Calu3 (cell line): ENCODE measurements at regions of chr1 and their contacts with region 1.

Region 1: GRCh38 chr1:34786521-34787325 is 5.7 kb downstream of the GJB3 start:
- DNase-seq: peak; percentile 70
- H3K4me3 Mint-ChIP-seq: no peak overlapping the region
- H3K27ac Mint-ChIP-seq: no peak overlapping the region
- H3K4me1 Mint-ChIP-seq: peaks cover 31% of the 10 kb centered on the region
- H3K27me3 Mint-ChIP-seq: peaks cover 12% of the 10 kb centered on the region
- CTCF ChIP-seq: peak; percentile 84

Region 2: GRCh38 chr1:34245967-34246366 is 540.8 kb before region 1 on chr1:
- CTCF ChIA-PET with region 1: no interaction called
- intact Hi-C with region 1: no loop called
- DNase-seq: no peak
- H3K4me3 Mint-ChIP-seq: no peak overlapping the region
- H3K27ac Mint-ChIP-seq: no peak overlapping the region
- H3K4me1 Mint-ChIP-seq: no peaks in the 10 kb centered on the region
- H3K27me3 Mint-ChIP-seq: peaks cover 16% of the 10 kb centered on the region
- CTCF ChIP-seq: no peak

Region 3: DNA sequence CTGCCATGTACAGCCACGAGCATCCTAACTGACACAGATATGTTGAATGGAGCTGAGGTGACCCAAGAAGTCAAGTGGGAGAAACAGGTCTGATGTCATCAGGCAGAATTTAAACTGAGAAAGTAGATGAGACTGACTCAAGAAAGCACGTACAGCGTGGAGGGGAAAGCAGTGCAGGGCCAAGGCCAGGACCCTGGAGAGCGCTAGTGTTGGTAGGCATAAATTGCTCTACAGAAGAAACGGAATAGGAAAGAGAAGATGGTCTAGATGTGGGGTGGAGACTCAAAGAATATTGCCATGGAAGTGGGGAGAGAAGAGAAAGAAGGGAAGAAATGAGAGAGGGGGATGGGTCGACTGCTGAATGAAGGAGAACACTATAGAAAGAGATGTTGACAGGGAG is 77.2 kb before region 1 on chr1:
- CTCF ChIA-PET with region 1: no interaction called
- intact Hi-C with region 1: no loop called
- DNase-seq: no peak
- H3K4me3 Mint-ChIP-seq: no peak overlapping the region
- H3K27ac Mint-ChIP-seq: no peak overlapping the region
- H3K4me1 Mint-ChIP-seq: no peaks in the 10 kb centered on the region
- H3K27me3 Mint-ChIP-seq: peaks cover 72% of the 10 kb centered on the region
- CTCF ChIP-seq: no peak

Region 4: GRCh38 chr1:34842073-34842472 is 55.4 kb after region 1 on chr1:
- CTCF ChIA-PET with region 1: no interaction called
- intact Hi-C with region 1: no loop called
- DNase-seq: no peak
- H3K4me3 Mint-ChIP-seq: no peak overlapping the region
- H3K27ac Mint-ChIP-seq: no peak overlapping the region
- H3K4me1 Mint-ChIP-seq: peaks cover 8% of the 10 kb centered on the region
- H3K27me3 Mint-ChIP-seq: no peaks in the 10 kb centered on the region
- CTCF ChIP-seq: no peak

Region 5: GRCh38 chr1:34852677-34853217 is 66.0 kb after region 1 on chr1:
- CTCF ChIA-PET with region 1: interaction called, 6 read pairs
- intact Hi-C with region 1: loop called (anchors 1 kb)
- DNase-seq: peak; percentile 92
- H3K4me3 Mint-ChIP-seq: no peak overlapping the region
- H3K27ac Mint-ChIP-seq: no peak overlapping the region
- H3K4me1 Mint-ChIP-seq: peaks cover 6% of the 10 kb centered on the region
- H3K27me3 Mint-ChIP-seq: no peaks in the 10 kb centered on the region
- CTCF ChIP-seq: peak; percentile 97